Activated naive CD4-positive, alpha-beta T cell treated with anti-CD3 and anti-CD28 coated beads, Interleukin-2, amount 10 ng/mL, durations not matched to agents 7 days and 5 days (primary cell): ENCODE measurements at regions of chr6 and their contacts with region 1.

Region 1: DNA sequence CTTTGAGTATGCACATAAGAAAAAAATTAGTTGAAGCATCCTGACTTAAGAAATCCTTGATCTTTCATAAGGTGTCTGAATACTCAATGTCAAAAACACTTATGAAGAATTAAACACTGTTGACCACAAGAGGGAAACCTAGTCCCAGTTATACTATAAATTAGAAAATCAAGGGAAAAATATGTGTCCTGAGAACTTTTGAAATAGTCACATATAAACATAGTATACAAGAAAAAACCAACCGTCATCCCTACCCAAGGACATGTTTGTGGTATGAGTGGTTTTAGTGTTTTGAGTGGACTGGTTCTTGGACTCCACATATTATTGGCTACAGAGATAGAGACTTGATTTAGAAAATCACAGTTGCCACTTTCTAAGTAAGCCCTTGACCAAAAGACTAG is 7.6 kb upstream of the HLA-DRA start:
- DNase-seq: no peak
- H3K4me3 Mint-ChIP-seq: no peak overlapping the region
- H3K27ac Mint-ChIP-seq: no peak overlapping the region
- H3K4me1 Mint-ChIP-seq: no peaks in the 10 kb centered on the region
- H3K27me3 Mint-ChIP-seq: peaks cover 20% of the 10 kb centered on the region

Region 2: DNA sequence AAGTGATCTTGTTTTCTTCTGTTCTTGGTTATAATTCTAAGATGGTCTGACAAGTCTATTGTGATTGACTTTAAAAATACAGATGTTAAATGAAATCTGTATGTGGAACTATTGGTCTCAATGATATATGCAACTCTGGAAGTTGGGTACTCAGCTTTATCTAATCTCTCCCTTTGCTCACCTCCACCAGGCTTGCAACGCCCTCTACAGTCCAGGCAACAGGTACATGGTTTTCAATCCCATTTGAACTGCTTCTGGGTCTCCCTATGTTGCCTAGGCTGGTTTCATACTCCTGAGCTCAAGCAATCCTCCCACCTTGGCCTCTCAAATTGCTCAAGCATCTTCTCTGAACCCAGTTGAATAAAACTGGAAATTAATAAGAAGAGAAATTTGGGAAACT is 260.0 kb after region 1 on chr6:
- CTCF ChIA-PET with region 1: interaction called, 12 read pairs
- DNase-seq: peak; percentile 73
- H3K4me3 Mint-ChIP-seq: no peak overlapping the region
- H3K27ac Mint-ChIP-seq: no peak overlapping the region
- H3K4me1 Mint-ChIP-seq: peaks cover 15% of the 10 kb centered on the region
- H3K27me3 Mint-ChIP-seq: peaks cover 38% of the 10 kb centered on the region

Region 3: DNA sequence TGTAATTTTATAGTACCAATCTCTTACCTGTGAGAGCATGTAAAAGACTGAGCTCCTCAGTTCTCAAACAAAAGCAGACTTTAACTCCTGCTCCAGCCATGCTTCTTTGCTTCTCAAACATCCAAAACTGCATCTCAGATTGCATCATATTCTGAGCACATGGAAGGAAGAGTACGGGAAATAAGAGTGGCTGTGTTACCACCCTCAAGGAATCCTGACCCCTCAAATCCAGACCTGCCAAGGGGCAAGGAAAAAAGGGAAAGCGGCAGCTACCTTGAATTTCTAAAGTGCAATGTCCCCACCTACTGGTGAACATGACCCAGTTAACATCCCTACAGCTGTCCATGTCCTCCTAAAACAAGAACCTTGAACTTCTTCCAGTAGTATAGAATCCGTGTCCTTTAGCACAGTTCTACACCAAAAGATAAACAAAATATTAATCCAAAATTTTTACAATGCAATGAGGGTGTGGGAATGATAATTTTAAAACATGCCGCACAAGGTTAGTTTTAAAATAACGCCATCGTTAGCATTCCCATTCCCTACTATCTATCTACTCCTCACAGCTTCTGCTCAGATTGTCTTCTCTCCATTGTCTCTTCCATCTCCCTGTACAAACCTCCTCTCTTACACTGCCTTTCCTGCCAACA is 268.5 kb after region 1 on chr6:
- CTCF ChIA-PET with region 1: interaction called, 37 read pairs
- DNase-seq: peak; percentile 43
- H3K4me3 Mint-ChIP-seq: no peak overlapping the region
- H3K27ac Mint-ChIP-seq: no peak overlapping the region
- H3K4me1 Mint-ChIP-seq: peaks cover 2% of the 10 kb centered on the region
- H3K27me3 Mint-ChIP-seq: peaks cover 44% of the 10 kb centered on the region

Region 4: DNA sequence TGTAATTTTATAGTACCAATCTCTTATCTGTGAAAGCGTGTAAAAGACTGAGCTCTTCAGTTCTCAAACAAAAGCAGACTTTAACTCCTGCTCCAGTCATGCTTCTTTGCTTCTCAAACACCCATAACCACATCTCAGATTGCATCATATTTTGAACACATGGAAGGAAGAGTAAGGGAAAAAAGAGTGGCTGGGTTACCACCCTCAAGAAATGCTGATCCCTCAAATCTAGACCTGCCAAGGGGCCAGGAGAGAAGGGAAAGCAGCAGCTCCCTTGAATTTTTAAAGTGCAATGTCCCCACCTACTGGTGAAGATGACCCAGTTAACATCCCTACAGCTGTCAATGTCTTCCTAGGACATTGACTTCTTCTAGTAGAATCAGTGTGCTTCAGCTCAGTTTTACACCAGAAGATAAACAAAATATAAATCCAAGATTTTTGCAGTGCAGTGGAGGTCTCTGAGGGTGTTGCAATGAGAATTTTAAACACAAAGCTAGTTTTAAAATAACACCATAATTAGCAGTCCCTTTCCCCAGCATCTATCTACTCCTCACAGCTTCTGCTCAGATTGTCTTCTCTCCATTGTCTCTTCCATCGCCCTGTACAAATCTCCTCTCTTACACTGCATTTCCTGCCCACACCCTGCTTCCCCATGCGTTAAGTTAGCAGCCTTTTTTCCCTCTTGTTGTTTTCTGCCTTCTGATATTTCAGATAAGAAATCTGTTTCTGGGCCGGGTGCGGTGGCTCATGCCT is 353.9 kb after region 1 on chr6:
- CTCF ChIA-PET with region 1: interaction called, 15 read pairs
- DNase-seq: peak; percentile 45
- H3K4me3 Mint-ChIP-seq: no peak overlapping the region
- H3K27ac Mint-ChIP-seq: no peak overlapping the region
- H3K4me1 Mint-ChIP-seq: no peaks in the 10 kb centered on the region
- H3K27me3 Mint-ChIP-seq: peaks cover 45% of the 10 kb centered on the region